Caco-2 (cell line): ENCODE measurements at regions of chr13 and their contacts with region 1.

Region 1: DNA sequence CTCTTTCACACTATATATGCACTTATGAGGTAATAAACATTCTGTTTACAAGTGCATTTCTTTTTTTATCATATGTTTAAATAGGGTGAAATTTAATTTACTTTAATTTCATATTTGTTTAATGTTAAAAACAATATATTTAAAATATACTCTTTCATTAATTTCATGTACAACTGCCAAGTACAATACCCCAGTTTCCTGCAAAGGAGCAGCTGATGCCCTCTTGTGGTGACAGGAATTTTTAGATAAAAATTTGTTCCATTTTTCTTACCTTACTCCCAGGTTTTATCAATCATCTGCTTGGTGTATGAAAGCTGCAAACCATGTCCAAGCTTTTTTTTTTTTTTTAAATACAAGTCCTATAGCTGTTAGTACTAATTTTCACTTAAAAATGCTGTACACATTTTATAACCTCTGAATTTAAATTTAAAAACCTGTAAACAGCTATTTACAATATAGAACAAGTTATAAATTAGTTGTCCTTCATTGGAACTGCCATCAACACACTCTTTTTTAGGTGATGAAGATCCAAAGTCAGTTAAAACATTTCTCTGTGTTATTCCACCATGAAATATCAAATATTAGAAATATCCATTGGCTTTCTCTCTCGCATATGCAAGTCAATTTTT is 4.9 kb downstream of the PCDH20 start:
- DNase-seq: no peak
- H3K4me3 ChIP-seq: no peak overlapping the region
- H3K4me3 Mint-ChIP-seq: no peak overlapping the region
- H3K27ac Mint-ChIP-seq: no peak overlapping the region
- H3K4me1 ChIP-seq: no peaks in the 10 kb centered on the region
- H3K4me1 Mint-ChIP-seq: peaks cover 8% of the 10 kb centered on the region
- H3K27me3 ChIP-seq: no peaks in the 10 kb centered on the region
- H3K27me3 Mint-ChIP-seq: peaks cover 9% of the 10 kb centered on the region
- CTCF ChIP-seq: peak; percentile 62 to 73

Region 2: DNA sequence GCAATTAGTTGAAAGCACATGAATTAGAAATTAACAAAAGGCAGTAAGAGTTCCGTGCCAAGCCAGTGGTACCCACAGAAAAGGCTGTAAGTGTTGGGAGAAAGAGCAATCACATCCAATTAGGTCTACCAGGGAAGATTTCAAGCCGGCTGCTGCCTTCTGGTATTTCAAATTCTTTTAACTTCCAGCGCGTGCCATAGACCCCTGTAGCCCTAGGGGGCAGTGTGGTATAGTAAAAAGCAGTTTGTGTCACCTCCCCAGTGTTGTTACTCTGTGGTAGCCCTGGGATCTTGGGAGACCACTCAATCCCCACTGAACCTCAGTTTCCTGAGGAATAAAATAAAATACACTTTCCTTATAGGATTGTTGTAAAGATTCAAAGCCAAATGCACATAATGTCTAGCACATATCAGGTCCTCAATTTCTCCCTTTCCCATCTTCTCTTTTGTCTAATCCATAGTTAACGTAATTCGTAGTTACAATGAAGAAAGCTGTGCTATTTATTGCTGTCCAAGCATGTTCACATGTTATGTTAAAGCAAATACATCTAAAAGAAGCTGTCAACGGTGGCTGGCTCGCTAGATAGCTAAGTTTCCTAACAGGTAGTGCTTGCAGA is 783.6 kb before region 1 on chr13:
- CTCF ChIA-PET with region 1: no interaction called
- POLR2A ChIA-PET with region 1: no interaction called
- intact Hi-C with region 1: loop called (anchors 1 kb)
- DNase-seq: peak; percentile 44 to 71
- H3K4me3 ChIP-seq: no peak overlapping the region
- H3K4me3 Mint-ChIP-seq: no peak overlapping the region
- H3K27ac Mint-ChIP-seq: no peak overlapping the region
- H3K4me1 ChIP-seq: no peaks in the 10 kb centered on the region
- H3K4me1 Mint-ChIP-seq: no peaks in the 10 kb centered on the region
- H3K27me3 ChIP-seq: no peaks in the 10 kb centered on the region; the same call in 1 of the 2 replicates
- H3K27me3 Mint-ChIP-seq: peaks cover 27% of the 10 kb centered on the region
- CTCF ChIP-seq: peak; percentile 78 to 81

Region 3: DNA sequence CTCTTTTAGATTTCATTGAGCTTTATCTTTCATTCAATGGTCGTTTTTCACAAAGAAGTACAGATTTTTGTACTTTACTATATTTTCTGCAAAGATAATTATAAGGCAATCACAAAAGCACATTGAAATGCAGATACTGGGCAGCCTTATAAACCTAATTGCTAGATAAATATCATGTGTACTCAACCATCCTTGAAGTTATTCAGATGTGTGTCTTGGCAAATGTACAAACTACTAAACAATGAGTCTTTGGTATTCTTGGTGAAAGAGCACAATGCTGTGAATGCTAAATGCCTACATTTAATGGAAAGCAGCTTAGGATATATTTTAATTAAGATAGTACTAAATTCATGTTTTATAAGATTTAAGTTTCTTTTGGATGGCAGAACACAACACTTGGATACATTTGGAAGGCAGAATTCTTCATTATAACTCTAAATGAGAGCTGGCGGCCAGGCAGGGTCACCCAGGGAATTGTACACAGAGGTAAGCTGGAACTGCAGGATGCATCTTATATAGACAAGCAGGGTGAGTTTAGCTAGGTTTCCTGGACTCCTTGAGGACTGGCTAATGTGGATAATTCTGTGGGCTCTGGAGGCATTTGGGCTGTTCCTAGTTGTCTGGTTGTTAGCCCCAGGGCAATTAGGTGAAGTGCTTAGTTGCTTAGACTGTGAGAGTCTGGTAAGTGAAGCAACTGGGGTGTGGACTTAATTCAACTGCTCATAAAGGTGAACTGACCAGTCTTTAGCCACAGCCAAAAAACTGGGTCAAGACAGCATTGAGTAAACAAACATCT is 281.7 kb before region 1 on chr13:
- CTCF ChIA-PET with region 1: no interaction called
- POLR2A ChIA-PET with region 1: no interaction called
- intact Hi-C with region 1: loop called (anchors 10 kb)
- DNase-seq: no peak
- H3K4me3 ChIP-seq: no peak overlapping the region
- H3K4me3 Mint-ChIP-seq: no peak overlapping the region
- H3K27ac Mint-ChIP-seq: no peak overlapping the region
- H3K4me1 ChIP-seq: peaks cover 18% of the 10 kb centered on the region
- H3K4me1 Mint-ChIP-seq: peaks cover 10% of the 10 kb centered on the region
- H3K27me3 ChIP-seq: no peaks in the 10 kb centered on the region
- H3K27me3 Mint-ChIP-seq: no peaks in the 10 kb centered on the region
- CTCF ChIP-seq: no peak

Region 4: GRCh38 chr13:61575973-61576372 is 165.2 kb after region 1 on chr13:
- CTCF ChIA-PET with region 1: no interaction called
- POLR2A ChIA-PET with region 1: no interaction called
- intact Hi-C with region 1: loop called (anchors 5 kb)
- DNase-seq: peak in 1 of 2 experiments; percentile 7
- H3K4me3 ChIP-seq: no peak overlapping the region
- H3K4me3 Mint-ChIP-seq: no peak overlapping the region
- H3K27ac Mint-ChIP-seq: no peak overlapping the region
- H3K4me1 ChIP-seq: peaks cover 13% of the 10 kb centered on the region
- H3K4me1 Mint-ChIP-seq: peaks cover 11% of the 10 kb centered on the region
- H3K27me3 ChIP-seq: no peaks in the 10 kb centered on the region
- H3K27me3 Mint-ChIP-seq: no peaks in the 10 kb centered on the region
- CTCF ChIP-seq: no peak

Region 5: GRCh38 chr13:61685682-61686012 is 274.9 kb after region 1 on chr13:
- CTCF ChIA-PET with region 1: no interaction called
- POLR2A ChIA-PET with region 1: no interaction called
- intact Hi-C with region 1: loop called (anchors 5 kb)
- DNase-seq: peak; percentile 48 to 54
- H3K4me3 ChIP-seq: no peak overlapping the region
- H3K4me3 Mint-ChIP-seq: no peak overlapping the region
- H3K27ac Mint-ChIP-seq: no peak overlapping the region
- H3K4me1 ChIP-seq: no peaks in the 10 kb centered on the region
- H3K4me1 Mint-ChIP-seq: no peaks in the 10 kb centered on the region
- H3K27me3 ChIP-seq: no peaks in the 10 kb centered on the region
- H3K27me3 Mint-ChIP-seq: no peaks in the 10 kb centered on the region
- CTCF ChIP-seq: peak in 1 of 2 experiments; percentile 58